Adrenal gland (tissue), 19 donors: ENCODE measurements at regions of chr20 and their contacts with region 1.

Region 1: GRCh38 chr20:56540420-56540819 is 7.4 kb downstream of the FAM209B start:
- DNase-seq: no peak
- H3K4me3 ChIP-seq: no peak overlapping the region
- H3K27ac ChIP-seq: no peak overlapping the region
- H3K4me1 ChIP-seq: no peaks in the 10 kb centered on the region
- H3K27me3 ChIP-seq: no peaks in the 10 kb centered on the region
- CTCF ChIP-seq: no peak
- POLR2A ChIP-seq: no peak

Region 2: DNA sequence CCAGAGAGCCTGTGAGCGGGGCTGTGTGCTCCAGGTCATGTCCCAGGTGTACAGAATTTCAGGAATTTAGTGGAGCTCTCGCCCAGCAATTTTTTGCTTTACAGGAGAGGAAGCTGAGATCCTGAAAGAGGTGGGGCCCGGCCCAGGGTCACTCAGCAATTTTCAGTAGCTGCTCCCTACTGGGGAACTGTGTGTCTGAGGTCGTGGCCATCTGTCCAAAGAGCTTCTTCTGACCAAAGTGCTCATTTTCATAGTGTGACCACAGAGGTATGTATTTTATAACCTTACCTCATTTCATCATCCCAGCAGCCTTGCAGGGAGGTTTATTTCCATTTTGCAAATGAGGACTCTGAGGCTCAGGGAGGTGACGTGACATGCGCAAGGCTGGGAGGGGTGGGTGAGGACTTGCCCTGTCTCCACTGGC is 38.9 kb after region 1 on chr20:
- intact Hi-C with region 1: loop called in 1 of 2 experiments (anchors 2 kb)
- DNase-seq: no peak
- H3K4me3 ChIP-seq: no peak overlapping the region
- H3K27ac ChIP-seq: no peak overlapping the region
- H3K4me1 ChIP-seq: peaks cover 4% of the 10 kb centered on the region in 2 donors
- H3K27me3 ChIP-seq: peaks cover 4% of the 10 kb centered on the region
- CTCF ChIP-seq: no peak
- POLR2A ChIP-seq: no peak